Activated CD4-positive, alpha-beta T cell treated with anti-CD3 and anti-CD28 coated beads for 36 hours (primary cell): ENCODE measurements at regions of chr6 and their contacts with region 1.

Region 1: GRCh38 chr6:53426667-53427270 is 78.0 kb upstream of the ELOVL5 start:
- DNase-seq: no peak
- ATAC-seq: peak; percentile 96
- H3K4me3 Mint-ChIP-seq: no peak overlapping the region
- H3K27ac Mint-ChIP-seq: peak overlapping the region; percentile 26
- H3K4me1 Mint-ChIP-seq: peaks cover 23% of the 10 kb centered on the region
- H3K27me3 Mint-ChIP-seq: peaks cover 11% of the 10 kb centered on the region

Region 2: GRCh38 chr6:53119772-53120409 is 306.9 kb before region 1 on chr6:
- CTCF ChIA-PET with region 1: no interaction called
- POLR2A ChIA-PET with region 1: no interaction called
- intact Hi-C with region 1: no loop called
- DNase-seq: no peak
- ATAC-seq: no peak
- H3K4me3 Mint-ChIP-seq: no peak overlapping the region
- H3K27ac Mint-ChIP-seq: no peak overlapping the region
- H3K4me1 Mint-ChIP-seq: no peaks in the 10 kb centered on the region
- H3K27me3 Mint-ChIP-seq: peaks cover 7% of the 10 kb centered on the region

Region 3: DNA sequence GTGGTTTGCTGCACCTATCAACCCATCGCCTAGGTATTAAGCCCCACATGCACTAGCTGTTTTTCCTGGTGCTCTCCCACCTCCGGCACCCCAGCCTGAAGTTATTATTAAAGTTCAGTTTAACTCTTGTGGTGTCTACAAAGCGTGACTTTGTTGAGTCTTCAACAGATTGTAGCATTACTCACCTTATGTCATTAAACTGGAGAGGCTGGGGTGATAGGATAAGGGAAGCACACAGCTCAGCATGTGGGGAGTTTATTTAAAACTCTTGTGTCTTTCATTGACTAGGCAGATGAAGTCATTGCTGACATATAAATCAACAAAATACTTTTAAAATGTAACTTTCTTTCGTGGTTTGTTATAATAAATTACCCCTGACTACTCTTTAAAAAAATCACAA is 193.5 kb before region 1 on chr6:
- CTCF ChIA-PET with region 1: interaction called, 3 read pairs
- POLR2A ChIA-PET with region 1: no interaction called
- intact Hi-C with region 1: loop called in 1 of 2 experiments (anchors 5 kb)
- DNase-seq: no peak
- ATAC-seq: no peak
- H3K4me3 Mint-ChIP-seq: no peak overlapping the region
- H3K27ac Mint-ChIP-seq: no peak overlapping the region
- H3K4me1 Mint-ChIP-seq: peaks cover 32% of the 10 kb centered on the region
- H3K27me3 Mint-ChIP-seq: no peaks in the 10 kb centered on the region

Region 4: GRCh38 chr6:53263917-53264316 is 162.9 kb before region 1 on chr6:
- CTCF ChIA-PET with region 1: no interaction called
- POLR2A ChIA-PET with region 1: no interaction called
- intact Hi-C with region 1: no loop called
- DNase-seq: no peak
- ATAC-seq: no peak
- H3K4me3 Mint-ChIP-seq: no peak overlapping the region
- H3K27ac Mint-ChIP-seq: no peak overlapping the region
- H3K4me1 Mint-ChIP-seq: peaks cover 2% of the 10 kb centered on the region
- H3K27me3 Mint-ChIP-seq: no peaks in the 10 kb centered on the region

Region 5: DNA sequence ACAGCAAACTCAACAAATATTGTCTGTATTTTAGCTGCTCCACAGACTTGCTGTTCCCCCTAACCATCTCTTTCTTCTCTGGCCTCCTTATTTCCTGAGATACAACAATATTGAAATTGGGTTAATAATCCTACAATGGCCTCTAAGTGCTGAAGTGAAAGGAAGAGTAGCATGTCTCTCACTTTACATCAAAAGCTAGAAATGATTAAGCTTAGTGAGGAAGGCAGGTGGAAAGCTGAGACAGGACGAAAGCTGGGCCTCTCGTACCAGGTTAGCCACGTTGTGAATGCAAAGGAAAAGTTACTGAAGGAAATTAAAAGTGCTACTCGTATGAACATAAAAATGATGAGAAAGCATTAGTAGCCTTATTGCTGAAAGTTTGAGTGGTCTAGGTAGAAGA is 141.9 kb before region 1 on chr6:
- CTCF ChIA-PET with region 1: no interaction called
- POLR2A ChIA-PET with region 1: no interaction called
- intact Hi-C with region 1: loop called in 1 of 2 experiments (anchors 5 kb)
- DNase-seq: peak; percentile 46
- ATAC-seq: peak; percentile 82
- H3K4me3 Mint-ChIP-seq: no peak overlapping the region
- H3K27ac Mint-ChIP-seq: peak overlapping the region; percentile 68
- H3K4me1 Mint-ChIP-seq: peaks cover 49% of the 10 kb centered on the region
- H3K27me3 Mint-ChIP-seq: no peaks in the 10 kb centered on the region

Region 6: GRCh38 chr6:53359072-53359842 is 67.5 kb before region 1 on chr6:
- CTCF ChIA-PET with region 1: no interaction called
- POLR2A ChIA-PET with region 1: no interaction called
- intact Hi-C with region 1: loop called in 1 of 2 experiments (anchors 1 kb)
- DNase-seq: peak; percentile 95
- ATAC-seq: peak; percentile 96
- H3K4me3 Mint-ChIP-seq: peak overlapping the region; percentile 87
- H3K27ac Mint-ChIP-seq: peak overlapping the region; percentile 98
- H3K4me1 Mint-ChIP-seq: peaks cover 45% of the 10 kb centered on the region
- H3K27me3 Mint-ChIP-seq: no peaks in the 10 kb centered on the region

Region 7: GRCh38 chr6:53504512-53504911 is 77.7 kb after region 1 on chr6:
- CTCF ChIA-PET with region 1: no interaction called
- POLR2A ChIA-PET with region 1: no interaction called
- intact Hi-C with region 1: no loop called
- DNase-seq: no peak
- ATAC-seq: no peak
- H3K4me3 Mint-ChIP-seq: no peak overlapping the region
- H3K27ac Mint-ChIP-seq: no peak overlapping the region
- H3K4me1 Mint-ChIP-seq: no peaks in the 10 kb centered on the region
- H3K27me3 Mint-ChIP-seq: no peaks in the 10 kb centered on the region

Region 8: DNA sequence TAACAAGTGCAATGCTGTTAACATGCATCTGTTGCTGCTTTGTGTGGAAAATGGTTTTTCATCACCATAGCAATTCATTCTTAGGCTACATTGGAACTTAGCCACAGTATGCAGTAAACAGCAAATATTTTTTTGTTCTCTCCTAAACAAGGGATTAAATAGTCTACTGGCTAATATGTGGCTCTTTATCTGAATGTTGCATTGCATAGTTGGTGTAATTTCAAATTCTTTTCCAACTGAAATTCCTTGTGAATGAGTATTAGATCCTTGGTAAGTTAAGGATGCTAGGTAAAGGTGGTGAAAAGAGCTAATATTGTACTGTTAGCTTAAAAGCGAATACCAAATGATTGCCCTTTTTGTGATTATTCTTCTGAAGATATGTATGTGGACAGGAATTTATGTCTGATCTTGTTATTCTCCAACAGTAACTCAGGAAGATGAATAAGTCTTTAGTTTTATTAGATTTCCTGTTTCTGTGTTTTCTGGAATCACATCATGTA is 685.4 kb after region 1 on chr6:
- CTCF ChIA-PET with region 1: no interaction called
- POLR2A ChIA-PET with region 1: no interaction called
- intact Hi-C with region 1: no loop called
- DNase-seq: no peak
- ATAC-seq: no peak
- H3K4me3 Mint-ChIP-seq: no peak overlapping the region
- H3K27ac Mint-ChIP-seq: no peak overlapping the region
- H3K4me1 Mint-ChIP-seq: no peaks in the 10 kb centered on the region
- H3K27me3 Mint-ChIP-seq: peaks cover 7% of the 10 kb centered on the region